Right ventricle myocardium superior (tissue), 1 donor: ENCODE measurements at regions of chr14 and their contacts with region 1.

Region 1: GRCh38 chr14:66974397-66975025 is 214.7 kb upstream of the GARIN2 start:
- DNase-seq: no peak
- ATAC-seq: no peak

Region 2: DNA sequence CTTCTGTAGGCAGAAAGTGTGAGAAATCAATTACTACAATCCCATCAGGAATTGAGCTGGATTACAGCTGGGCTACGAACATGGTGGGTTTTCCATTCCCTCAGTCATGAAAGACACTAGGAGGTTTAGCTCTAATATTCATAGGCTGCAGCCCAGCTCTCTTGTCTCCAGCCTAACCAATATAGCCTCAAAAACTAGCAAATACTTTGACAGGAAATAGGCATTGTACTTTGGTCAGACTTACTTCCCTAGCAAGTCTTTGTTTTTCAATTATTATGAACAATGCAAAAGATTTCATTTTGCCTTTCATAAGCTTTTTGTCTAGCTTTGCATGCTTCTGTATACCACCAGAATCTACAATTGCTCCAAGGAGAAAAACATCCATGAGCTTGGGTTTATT is 170.4 kb before region 1 on chr14:
- intact Hi-C with region 1: no loop called
- DNase-seq: no peak
- ATAC-seq: no peak

Region 3: GRCh38 chr14:66920196-66920595 is 54.3 kb before region 1 on chr14:
- intact Hi-C with region 1: loop called (anchors 10 kb)
- DNase-seq: no peak
- ATAC-seq: no peak